ENCODE measurements at regions of chr13 and their contacts with region 1.

Region 1: GRCh38 chr13:27374650-27375049 is 49.8 kb upstream of the GTF3A start:
- DNase-seq: peak in 4 of 5 donors; percentile 47 to 69 (median 58)
- ATAC-seq: peak; percentile 51 to 97 (median 96)
- H3K4me3 ChIP-seq: no peak overlapping the region
- H3K27ac ChIP-seq: no peak overlapping the region
- H3K4me1 ChIP-seq: peaks cover 0 to 5% (median 0%) of the 10 kb centered on the region in 12 donors
- H3K27me3 ChIP-seq: peaks cover 0 to 34% (median 14%) of the 10 kb centered on the region in 9 donors
- CTCF ChIP-seq: peak; percentile 61 to 86 (median 70)
- POLR2A ChIP-seq: no peak

Region 2: DNA sequence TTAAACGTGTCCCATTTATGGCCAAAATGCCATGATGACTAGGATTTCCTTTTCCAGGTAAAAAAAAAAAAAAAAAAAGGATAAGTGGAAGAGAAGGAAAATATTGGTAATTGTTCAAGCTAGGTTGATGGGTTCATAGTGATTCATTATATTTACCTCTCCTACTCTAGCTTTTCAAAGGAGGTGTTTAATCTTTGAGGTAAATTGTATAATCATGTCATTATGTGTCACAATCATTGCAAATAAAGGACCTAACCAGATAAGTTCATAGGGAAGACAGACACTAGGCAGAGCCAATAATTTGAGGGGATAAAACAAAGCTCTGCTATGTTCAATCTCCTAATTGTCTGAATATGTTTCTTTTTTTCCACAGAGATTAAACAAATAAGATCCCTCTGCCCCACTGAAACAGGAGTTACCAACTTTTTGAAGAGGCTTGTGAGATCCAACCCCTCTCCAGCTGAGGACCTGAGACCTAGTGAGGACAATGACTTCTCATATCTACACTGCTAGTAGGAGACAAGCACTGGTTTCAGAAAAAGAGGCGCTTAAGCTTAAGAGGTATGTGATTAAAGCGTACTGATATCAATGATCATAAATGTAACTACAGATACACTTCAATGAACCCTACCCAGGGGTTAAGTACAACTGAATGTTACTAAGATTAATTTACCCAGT is 264.4 kb before region 1 on chr13:
- intact Hi-C with region 1: no loop called
- DNase-seq: no peak
- ATAC-seq: no peak
- H3K4me3 ChIP-seq: no peak overlapping the region
- H3K27ac ChIP-seq: no peak overlapping the region
- H3K4me1 ChIP-seq: no peaks in the 10 kb centered on the region
- H3K27me3 ChIP-seq: no peaks in the 10 kb centered on the region
- CTCF ChIP-seq: no peak
- POLR2A ChIP-seq: no peak

Region 3: DNA sequence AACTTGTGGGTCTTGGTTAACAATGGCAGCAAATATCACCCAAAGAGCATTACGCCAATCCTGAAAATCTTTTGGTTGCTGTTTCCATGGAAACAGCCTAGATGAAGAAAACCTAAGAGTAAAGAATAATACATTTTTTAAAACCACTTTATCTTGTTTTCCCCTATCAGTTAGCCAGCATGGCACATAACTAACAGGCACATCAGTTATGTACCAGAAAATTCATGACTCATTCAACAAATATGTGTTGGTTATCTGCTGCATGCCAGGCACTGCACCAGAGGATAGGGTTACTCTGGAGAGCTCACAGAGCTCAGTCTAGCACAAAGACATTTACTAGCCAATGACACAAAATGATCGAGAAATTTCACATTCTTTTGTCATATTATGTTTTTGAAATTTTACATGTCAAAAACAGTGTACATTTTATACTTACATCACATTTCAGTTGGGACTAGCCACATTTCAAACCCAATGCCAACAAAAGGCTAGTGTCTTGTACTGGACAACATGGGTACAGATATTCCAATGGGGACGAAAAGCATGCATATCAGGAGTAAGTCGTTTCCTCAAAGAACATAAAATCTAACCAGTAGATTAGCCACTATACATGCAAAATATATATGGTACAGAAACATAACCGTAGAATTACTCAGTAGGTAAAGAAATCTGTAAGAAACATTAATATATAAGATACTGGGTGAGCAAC is 225.3 kb after region 1 on chr13:
- intact Hi-C with region 1: no loop called
- DNase-seq: peak in 3 of 5 donors; percentile 27 to 41 (median 30)
- ATAC-seq: peak; percentile 85 to 96 (median 92)
- H3K4me3 ChIP-seq: no peak overlapping the region
- H3K27ac ChIP-seq: peak overlapping the region in 9 of 12 donors; percentile 11 to 79 (median 56)
- H3K4me1 ChIP-seq: peaks cover 0 to 50% (median 11%) of the 10 kb centered on the region in 12 donors
- H3K27me3 ChIP-seq: no peaks in the 10 kb centered on the region
- CTCF ChIP-seq: no peak
- POLR2A ChIP-seq: no peak

Region 4: DNA sequence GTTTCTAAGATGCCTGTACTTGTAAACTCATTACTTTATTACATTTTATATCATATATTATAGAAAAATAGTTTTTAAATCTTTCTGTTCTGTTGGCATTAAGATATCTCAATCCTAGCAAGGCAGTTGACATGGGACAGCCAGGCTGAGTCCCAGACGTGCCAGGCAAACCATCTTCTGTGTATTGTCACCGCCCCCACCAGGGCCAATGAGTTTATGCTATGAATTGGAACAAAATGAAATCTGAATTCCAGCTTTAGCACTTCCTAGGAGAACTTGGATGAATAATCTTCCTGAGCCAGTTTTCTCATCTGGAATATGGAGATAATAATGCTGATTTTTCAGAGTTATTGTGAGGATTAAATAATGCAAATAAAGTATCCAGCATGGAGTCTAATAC is 337.8 kb after region 1 on chr13:
- intact Hi-C with region 1: loop called in 3 of 10 experiments (anchors 5 to 10 kb)
- DNase-seq: peak in 1 of 5 donors; percentile 25
- ATAC-seq: peak in 2 of 4 donors; percentile 50 to 69
- H3K4me3 ChIP-seq: no peak overlapping the region
- H3K27ac ChIP-seq: no peak overlapping the region
- H3K4me1 ChIP-seq: no peaks in the 10 kb centered on the region
- H3K27me3 ChIP-seq: peaks cover 0 to 5% (median 0%) of the 10 kb centered on the region in 9 donors
- CTCF ChIP-seq: peak in 11 of 12 donors; percentile 25 to 63 (median 44)
- POLR2A ChIP-seq: no peak

Region 5: GRCh38 chr13:27980280-27980998 is 605.8 kb after region 1 on chr13:
- intact Hi-C with region 1: loop called in 3 of 10 experiments (anchors 5 kb)
- DNase-seq: no peak
- ATAC-seq: no peak
- H3K4me3 ChIP-seq: no peak overlapping the region
- H3K27ac ChIP-seq: no peak overlapping the region
- H3K4me1 ChIP-seq: peaks cover 0 to 37% (median 11%) of the 10 kb centered on the region in 12 donors
- H3K27me3 ChIP-seq: peaks cover 67 to 99% (median 89%) of the 10 kb centered on the region in 9 donors
- CTCF ChIP-seq: no peak
- POLR2A ChIP-seq: no peak